Activated CD8-positive, alpha-beta T cell treated with anti-CD3 and anti-CD28 coated beads, Interleukin-2, amount 10 ng/mL, durations not matched to agents 7 days and 5 days (primary cell): ENCODE measurements at regions of chr1 and their contacts with region 1.

Region 1: GRCh38 chr1:16960560-16961296 is 19.7 kb downstream of the MFAP2 start:
- DNase-seq: peak; percentile 85
- ATAC-seq: peak; percentile 94
- H3K4me3 Mint-ChIP-seq: peak overlapping the region; percentile 65
- H3K27ac Mint-ChIP-seq: peak overlapping the region; percentile 66
- H3K4me1 Mint-ChIP-seq: peaks cover 12% of the 10 kb centered on the region
- H3K27me3 Mint-ChIP-seq: no peaks in the 10 kb centered on the region

Region 2: DNA sequence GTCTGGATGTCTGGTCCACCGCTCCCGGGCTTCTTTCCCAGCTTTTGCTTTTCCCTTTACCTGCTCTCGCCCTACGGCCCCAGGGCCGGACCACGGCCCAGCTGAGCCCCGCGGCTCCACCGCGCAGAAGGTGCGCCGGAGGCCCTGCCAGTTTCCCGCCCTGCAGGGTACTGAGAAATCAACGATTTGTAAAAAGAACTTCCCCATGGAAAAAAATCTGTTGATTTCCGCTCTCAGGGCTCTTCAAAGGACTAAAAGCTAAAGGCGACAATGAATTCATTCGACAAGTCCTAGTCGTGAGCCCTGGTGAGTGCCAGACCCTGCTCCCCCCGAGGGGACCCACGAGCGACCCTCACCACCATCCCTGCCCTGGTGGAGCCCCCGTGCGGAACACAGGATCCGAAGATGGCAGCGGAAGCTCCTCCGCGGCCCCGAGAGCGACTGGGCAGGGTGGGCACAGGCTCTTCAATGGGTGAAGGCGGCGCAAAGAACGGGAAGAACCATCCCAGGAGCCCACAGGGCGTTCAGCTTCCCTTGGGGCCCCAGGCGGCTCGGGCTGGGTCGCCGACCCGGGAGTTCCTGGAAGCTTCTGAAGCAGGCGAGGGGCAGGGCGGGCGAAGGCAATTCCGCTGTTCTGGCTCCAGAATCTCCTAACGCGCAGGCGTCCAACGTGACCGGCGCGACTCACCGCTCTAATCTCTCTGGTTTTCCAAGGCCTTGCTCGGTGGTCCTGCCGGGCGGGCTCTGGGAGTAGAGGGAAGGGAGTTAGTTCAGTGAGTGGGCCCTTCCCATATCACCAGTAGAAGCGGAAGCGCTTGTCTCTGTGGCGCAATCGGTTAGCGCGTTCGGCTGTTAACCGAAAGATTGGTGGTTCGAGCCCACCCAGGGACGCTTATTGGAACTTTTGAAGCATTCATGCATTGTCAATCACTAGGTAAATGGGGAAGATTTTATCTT is 71.6 kb before region 1 on chr1:
- CTCF ChIA-PET with region 1: no interaction called
- POLR2A ChIA-PET with region 1: no interaction called
- DNase-seq: peak; percentile 54
- ATAC-seq: peak; percentile 51
- H3K4me3 Mint-ChIP-seq: peak overlapping the region; percentile 82
- H3K27ac Mint-ChIP-seq: peak overlapping the region; percentile 58
- H3K4me1 Mint-ChIP-seq: peaks cover 17% of the 10 kb centered on the region
- H3K27me3 Mint-ChIP-seq: peaks cover 49% of the 10 kb centered on the region

Region 3: GRCh38 chr1:16978567-16979474 is 18.1 kb after region 1 on chr1:
- CTCF ChIA-PET with region 1: interaction called, 16 read pairs
- POLR2A ChIA-PET with region 1: no interaction called
- DNase-seq: no peak
- ATAC-seq: no peak
- H3K4me3 Mint-ChIP-seq: no peak overlapping the region
- H3K27ac Mint-ChIP-seq: no peak overlapping the region
- H3K4me1 Mint-ChIP-seq: peaks cover 9% of the 10 kb centered on the region
- H3K27me3 Mint-ChIP-seq: peaks cover 20% of the 10 kb centered on the region

Region 4: DNA sequence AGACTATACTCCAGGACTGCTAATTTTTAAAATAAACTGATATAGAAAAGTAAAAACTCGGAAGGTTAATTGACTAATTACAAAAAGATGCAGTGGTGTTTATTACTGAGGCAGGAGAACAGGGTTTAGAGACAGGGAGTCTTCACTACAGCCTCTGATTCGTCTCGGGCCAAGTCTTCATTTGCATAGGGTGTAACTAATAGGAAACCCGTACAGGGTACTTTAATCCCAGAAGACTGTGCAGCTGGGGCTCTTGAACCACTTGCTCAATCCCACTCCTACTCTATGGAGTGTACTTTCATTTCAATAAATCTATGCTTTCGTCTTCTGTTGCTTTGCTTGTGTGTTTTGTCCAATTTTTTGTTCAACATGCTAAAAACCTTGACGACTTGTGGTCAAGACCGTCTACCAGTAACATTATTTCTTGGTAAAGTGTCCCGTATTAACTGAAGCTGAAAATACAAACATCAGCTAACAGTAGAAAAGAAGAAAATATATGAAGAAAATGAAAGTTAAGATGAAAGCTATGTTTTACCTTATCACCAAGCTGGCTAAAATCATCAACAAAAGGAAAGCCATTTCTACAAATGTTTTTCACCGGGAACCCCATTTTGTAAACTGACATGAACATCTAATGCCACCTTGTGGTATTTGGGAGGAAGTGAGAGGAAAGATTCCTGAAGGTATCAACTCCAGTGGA is 85.1 kb after region 1 on chr1:
- CTCF ChIA-PET with region 1: interaction called, 18 read pairs
- POLR2A ChIA-PET with region 1: no interaction called
- DNase-seq: no peak
- ATAC-seq: no peak
- H3K4me3 Mint-ChIP-seq: no peak overlapping the region
- H3K27ac Mint-ChIP-seq: peak overlapping the region; percentile 61
- H3K4me1 Mint-ChIP-seq: peaks cover 21% of the 10 kb centered on the region
- H3K27me3 Mint-ChIP-seq: no peaks in the 10 kb centered on the region